B cell (primary cell): ENCODE measurements at regions of chr4 and their contacts with region 1.

Region 1: DNA sequence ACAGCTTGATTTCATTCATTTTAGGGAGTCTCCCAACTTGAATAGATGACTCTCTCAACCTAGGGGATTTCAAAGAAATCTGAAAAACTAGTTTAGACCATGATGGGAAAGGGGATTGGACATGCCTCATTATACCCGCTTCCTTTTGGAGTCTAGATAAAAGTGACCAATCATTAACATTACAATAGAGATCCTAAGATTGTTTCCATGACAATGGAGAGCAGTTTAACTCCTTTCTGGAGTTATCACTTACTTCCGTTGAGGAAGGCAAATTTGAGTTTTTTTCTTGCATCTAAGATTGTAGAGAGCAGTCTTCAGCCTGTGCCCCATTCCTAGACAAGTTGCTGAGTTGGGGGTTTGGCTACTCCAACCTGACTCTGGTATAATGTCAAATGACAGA is 11.4 kb upstream of the IL15 start:
- DNase-seq: no peak
- ATAC-seq: no peak
- H3K4me3 ChIP-seq: no peak overlapping the region
- H3K4me3 Mint-ChIP-seq: no peak overlapping the region
- H3K27ac ChIP-seq: no peak overlapping the region
- H3K27ac Mint-ChIP-seq: no peak overlapping the region
- H3K4me1 ChIP-seq: no peaks in the 10 kb centered on the region
- H3K4me1 Mint-ChIP-seq: no peaks in the 10 kb centered on the region
- H3K27me3 ChIP-seq: no peaks in the 10 kb centered on the region
- H3K27me3 Mint-ChIP-seq: no peaks in the 10 kb centered on the region
- CTCF ChIP-seq: no peak

Region 2: DNA sequence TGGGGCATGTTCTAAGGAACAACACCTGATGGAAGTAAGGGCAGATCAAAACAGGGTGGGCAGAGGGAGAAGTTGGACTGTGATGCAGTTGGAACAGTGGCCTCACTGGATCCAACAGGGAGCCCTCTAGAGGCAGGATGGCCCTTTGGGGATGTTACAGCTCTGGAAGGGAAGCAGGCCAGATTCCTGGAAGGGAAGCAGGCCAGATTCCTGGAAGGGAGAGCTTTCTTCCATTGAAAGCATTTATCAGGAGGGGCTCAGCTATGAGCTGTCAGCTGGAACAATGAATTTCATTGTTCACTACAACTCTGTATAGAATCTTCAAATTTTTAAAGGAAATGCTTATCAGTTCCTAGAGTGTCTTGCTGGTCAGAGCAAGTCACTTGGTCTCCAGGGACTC is 29.1 kb after region 1 on chr4:
- CTCF ChIA-PET with region 1: no interaction called
- POLR2A ChIA-PET with region 1: interaction called, 13 read pairs
- intact Hi-C with region 1: no loop called
- DNase-seq: no peak
- ATAC-seq: no peak
- H3K4me3 ChIP-seq: no peak overlapping the region
- H3K4me3 Mint-ChIP-seq: no peak overlapping the region
- H3K27ac ChIP-seq: no peak overlapping the region
- H3K27ac Mint-ChIP-seq: no peak overlapping the region
- H3K4me1 ChIP-seq: peaks cover 0 to 7% of the 10 kb centered on the region in 2 donors
- H3K4me1 Mint-ChIP-seq: peaks cover 4% of the 10 kb centered on the region
- H3K27me3 ChIP-seq: no peaks in the 10 kb centered on the region
- H3K27me3 Mint-ChIP-seq: no peaks in the 10 kb centered on the region
- CTCF ChIP-seq: no peak

Region 3: DNA sequence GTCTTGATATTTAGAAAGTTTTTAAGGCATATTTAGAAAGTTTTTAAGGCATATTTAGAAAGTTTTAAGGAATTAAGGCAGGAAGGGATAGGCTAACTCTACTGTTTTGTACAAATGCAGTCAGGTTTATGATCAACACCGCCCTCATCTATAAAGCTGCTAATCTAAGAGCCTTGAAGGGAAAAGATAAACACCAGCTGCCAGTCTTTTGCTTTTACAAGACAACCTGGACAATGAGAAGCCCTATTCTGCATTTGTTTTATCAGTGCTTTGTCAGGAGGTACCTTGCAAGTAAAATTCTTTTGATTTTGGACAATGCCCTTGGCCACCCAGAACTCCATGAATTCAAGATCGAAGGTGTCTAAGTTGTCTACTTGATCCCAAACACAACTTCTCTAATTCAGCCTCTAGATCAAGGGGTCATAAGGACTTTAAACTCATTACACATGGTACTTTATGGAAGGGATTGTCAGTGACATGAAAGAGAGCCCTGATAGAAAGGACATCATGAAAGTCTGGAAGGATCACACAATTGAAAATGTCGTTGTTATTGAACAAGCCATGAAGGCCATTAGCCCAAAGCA is 51.2 kb after region 1 on chr4:
- CTCF ChIA-PET with region 1: no interaction called
- POLR2A ChIA-PET with region 1: no interaction called
- intact Hi-C with region 1: no loop called
- DNase-seq: no peak
- ATAC-seq: no peak
- H3K4me3 ChIP-seq: no peak overlapping the region
- H3K4me3 Mint-ChIP-seq: no peak overlapping the region
- H3K27ac ChIP-seq: no peak overlapping the region
- H3K27ac Mint-ChIP-seq: no peak overlapping the region
- H3K4me1 ChIP-seq: peaks cover 4 to 6% of the 10 kb centered on the region in 2 donors
- H3K4me1 Mint-ChIP-seq: peaks cover 6% of the 10 kb centered on the region
- H3K27me3 ChIP-seq: no peaks in the 10 kb centered on the region
- H3K27me3 Mint-ChIP-seq: no peaks in the 10 kb centered on the region
- CTCF ChIP-seq: no peak

Region 4: GRCh38 chr4:141702472-141703182 is 77.6 kb after region 1 on chr4:
- CTCF ChIA-PET with region 1: no interaction called
- POLR2A ChIA-PET with region 1: no interaction called
- intact Hi-C with region 1: no loop called
- DNase-seq: no peak
- ATAC-seq: no peak
- H3K4me3 ChIP-seq: no peak overlapping the region
- H3K4me3 Mint-ChIP-seq: no peak overlapping the region
- H3K27ac ChIP-seq: no peak overlapping the region
- H3K27ac Mint-ChIP-seq: no peak overlapping the region
- H3K4me1 ChIP-seq: peaks cover 2 to 24% of the 10 kb centered on the region in 2 donors
- H3K4me1 Mint-ChIP-seq: peaks cover 23% of the 10 kb centered on the region
- H3K27me3 ChIP-seq: no peaks in the 10 kb centered on the region
- H3K27me3 Mint-ChIP-seq: no peaks in the 10 kb centered on the region
- CTCF ChIP-seq: no peak